Heart right ventricle (tissue), 16 donors: ENCODE measurements at regions of chr5 and their contacts with region 1.

Region 1: GRCh38 chr5:1140171-1140817 is 28.4 kb upstream of the SLC12A7 start:
- DNase-seq: peak; percentile 86 to 87
- ATAC-seq: peak; percentile 77 to 91 (median 87)
- H3K4me3 ChIP-seq: no peak overlapping the region
- H3K27ac ChIP-seq: no peak overlapping the region
- H3K4me1 ChIP-seq: peaks cover 0 to 33% (median 21%) of the 10 kb centered on the region in 9 donors
- H3K27me3 ChIP-seq: no peaks in the 10 kb centered on the region
- CTCF ChIP-seq: peak; percentile 85 to 97 (median 94)

Region 2: DNA sequence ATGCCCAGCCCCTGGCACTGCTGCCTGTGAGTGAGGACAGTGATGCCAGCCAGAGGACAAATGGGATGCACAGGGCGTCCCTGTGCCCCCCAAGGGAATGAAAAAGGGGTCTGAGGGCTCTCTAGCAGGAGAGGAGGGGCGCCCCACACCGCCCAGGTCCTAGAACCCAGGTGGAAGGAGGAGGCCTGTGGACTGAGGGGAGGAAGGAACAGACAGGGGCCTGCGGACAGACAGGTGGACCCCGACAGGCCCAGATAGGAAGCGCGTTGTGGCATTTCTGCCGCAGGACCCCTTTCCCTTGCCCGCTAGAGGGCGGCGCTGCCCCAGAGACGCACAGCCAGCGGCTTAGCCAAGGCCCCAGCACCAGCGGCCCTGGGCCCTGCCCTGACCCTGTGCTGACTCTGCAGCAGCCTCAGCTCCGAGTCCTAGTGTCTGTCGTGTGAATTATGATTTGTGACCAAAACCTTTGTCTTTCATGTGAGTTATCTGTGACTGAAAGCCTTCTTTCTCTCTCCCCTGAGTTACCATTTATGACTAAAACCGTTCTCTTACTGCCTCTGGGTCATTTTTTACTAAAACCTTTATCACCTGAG is 216.9 kb before region 1 on chr5:
- intact Hi-C with region 1: loop called in 4 of 10 experiments (anchors 1 to 10 kb)
- DNase-seq: peak; percentile 75 to 88
- ATAC-seq: peak; percentile 84 to 95 (median 91)
- H3K4me3 ChIP-seq: no peak overlapping the region
- H3K27ac ChIP-seq: no peak overlapping the region
- H3K4me1 ChIP-seq: peaks cover 0 to 19% (median 11%) of the 10 kb centered on the region in 9 donors
- H3K27me3 ChIP-seq: peaks cover 0 to 45% (median 29%) of the 10 kb centered on the region in 7 donors
- CTCF ChIP-seq: peak; percentile 65 to 95 (median 87)

Region 3: DNA sequence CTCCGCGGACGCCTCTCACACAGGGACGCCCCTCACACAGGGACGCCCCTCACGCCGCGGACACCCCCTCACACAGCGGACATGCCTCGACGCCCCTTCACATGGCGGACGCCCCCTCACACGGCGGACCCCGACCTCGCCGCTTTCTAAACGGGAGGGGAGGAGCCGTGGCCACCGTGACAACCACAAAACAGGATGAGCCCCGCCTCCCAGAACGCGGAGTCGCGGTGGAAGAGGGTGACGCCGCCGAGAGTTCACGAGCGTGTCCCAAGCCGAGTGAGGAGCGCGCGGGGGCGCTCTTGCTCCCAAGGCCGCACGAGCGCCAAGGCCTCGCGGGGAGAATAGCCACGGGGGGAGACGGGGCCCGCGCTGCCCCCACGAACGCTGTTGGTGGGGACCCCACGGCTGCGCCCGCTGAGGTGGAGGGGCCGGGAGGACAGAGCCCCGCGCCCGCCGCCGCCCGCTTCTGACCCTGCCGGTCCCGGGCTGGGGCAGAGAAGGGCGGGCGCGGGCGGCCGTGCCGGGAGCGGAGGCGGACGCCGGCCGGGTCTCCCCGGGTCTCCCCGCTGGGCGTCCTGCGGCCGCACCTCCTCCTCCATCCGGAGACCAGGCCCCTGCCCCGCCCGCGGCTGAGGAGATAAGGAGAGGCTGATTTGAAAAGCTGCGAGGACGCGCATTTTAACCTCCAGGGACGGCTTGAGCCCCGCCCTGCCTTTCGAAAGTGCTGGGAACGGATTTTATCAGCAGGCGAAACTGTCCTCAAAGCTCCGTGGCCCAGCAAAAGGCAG is 135.6 kb before region 1 on chr5:
- intact Hi-C with region 1: loop called in 8 of 10 experiments (anchors 5 to 10 kb)
- DNase-seq: peak; percentile 81 to 87
- ATAC-seq: peak; percentile 70 to 87 (median 81)
- H3K4me3 ChIP-seq: peak overlapping the region; percentile 24 to 64 (median 58)
- H3K27ac ChIP-seq: peak overlapping the region in 9 of 10 donors; percentile 50 to 80 (median 69)
- H3K4me1 ChIP-seq: peaks cover 3 to 36% (median 19%) of the 10 kb centered on the region in 9 donors
- H3K27me3 ChIP-seq: peaks cover 0 to 59% (median 19%) of the 10 kb centered on the region in 7 donors
- CTCF ChIP-seq: peak; percentile 14 to 76 (median 57)

Region 4: DNA sequence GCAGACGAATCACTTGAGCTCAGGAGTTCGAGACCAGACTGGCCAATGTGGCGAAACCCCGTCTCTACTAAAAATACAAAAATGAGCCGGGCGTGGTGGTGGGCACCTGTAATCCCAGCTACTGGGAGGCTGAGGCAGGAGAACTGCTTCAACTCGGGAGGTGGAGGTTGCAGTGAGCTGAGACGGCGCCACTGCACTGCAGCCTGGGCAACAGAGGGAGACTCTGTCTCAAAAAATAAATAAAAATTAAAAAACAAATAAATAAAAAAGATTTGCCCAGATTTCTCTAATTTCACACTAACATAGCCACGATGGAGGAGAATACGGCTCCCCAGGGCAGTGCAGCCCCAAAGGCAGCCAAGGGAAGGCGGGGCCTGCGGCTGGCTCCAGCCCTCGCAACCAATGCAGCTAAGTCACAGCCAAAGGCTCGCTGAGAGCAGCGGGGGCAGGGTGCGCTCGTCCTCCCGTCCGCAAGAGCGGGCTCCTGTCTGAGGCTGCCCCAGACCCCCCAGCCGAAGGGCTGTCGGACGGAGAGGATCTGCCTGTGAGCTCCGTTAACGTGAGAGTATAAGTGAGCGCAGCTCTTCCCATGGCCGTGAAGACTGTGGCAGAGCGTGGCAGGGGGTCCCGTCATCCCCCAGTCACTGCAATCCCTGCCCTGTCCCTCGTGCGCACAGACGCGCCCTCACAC is 71.9 kb before region 1 on chr5:
- intact Hi-C with region 1: loop called in 1 of 10 experiments (anchors 10 kb)
- DNase-seq: peak in 1 of 2 donors; percentile 71
- ATAC-seq: peak; percentile 85 to 97 (median 90)
- H3K4me3 ChIP-seq: no peak overlapping the region
- H3K27ac ChIP-seq: peak overlapping the region in 4 of 10 donors; percentile 8 to 48 (median 27)
- H3K4me1 ChIP-seq: peaks cover 0 to 28% (median 10%) of the 10 kb centered on the region in 9 donors
- H3K27me3 ChIP-seq: no peaks in the 10 kb centered on the region
- CTCF ChIP-seq: no peak

Region 5: GRCh38 chr5:1111727-1112289 is 28.5 kb before region 1 on chr5 and contains the start of gene SLC12A7:
- intact Hi-C with region 1: loop called in 1 of 10 experiments (anchors 2 kb)
- DNase-seq: peak in 1 of 2 donors; percentile 74
- ATAC-seq: peak in 7 of 8 donors; percentile 18 to 81 (median 35)
- H3K4me3 ChIP-seq: peak within 1 kb of the TSS; percentile 74 to 99 (median 97)
- H3K27ac ChIP-seq: peak within 1 kb of the TSS; percentile 91 to 99 (median 97)
- H3K4me1 ChIP-seq: peaks cover 7 to 45% (median 41%) of the 10 kb centered on the region in 9 donors
- H3K27me3 ChIP-seq: peaks cover 0 to 3% (median 0%) of the 10 kb centered on the region in 7 donors
- CTCF ChIP-seq: no peak
- total RNA-seq, gene SLC12A7: 122 to 208 (median 146) TPM